ENCODE measurements at regions of chr14 and their contacts with region 1.

Region 1: DNA sequence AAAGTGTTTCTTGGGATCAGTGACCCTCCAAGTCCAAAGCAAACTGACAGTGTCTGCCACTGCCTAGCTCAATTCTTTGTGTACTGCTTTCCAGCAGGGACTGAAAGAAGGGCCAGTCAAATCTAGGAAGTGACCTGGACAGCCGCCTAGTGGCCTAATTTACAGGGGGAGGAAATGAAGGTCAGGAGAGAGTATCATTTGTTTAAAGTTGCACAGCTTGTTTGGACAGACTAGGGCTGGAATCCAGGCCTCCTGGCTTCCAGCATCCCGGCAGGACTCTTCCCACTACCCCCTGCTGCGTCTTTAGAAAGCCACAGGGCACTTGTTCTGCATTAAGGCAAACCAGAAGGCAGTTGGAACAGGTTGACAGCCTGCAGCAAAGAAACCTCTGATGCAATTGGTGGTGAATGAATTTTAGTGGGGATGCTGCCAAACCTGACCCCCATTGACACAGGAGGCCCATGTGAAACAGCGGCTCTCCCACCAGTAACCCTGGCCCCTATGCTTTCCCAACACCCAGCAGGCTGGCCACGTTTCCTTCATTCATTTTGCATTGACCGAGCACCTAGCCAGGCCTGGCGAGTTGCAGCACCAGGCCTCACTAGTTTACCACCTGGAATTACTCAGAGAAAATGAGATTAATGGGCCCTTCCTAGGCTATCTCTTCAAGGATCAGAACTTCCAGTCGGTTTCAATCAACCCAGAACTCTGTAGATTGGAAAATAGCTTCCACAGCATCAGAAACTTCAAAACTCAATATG is 28.2 kb downstream of the GALNT16 start:
- DNase-seq: peak; percentile 37
- H3K4me3 ChIP-seq: no peak overlapping the region
- H3K27me3 ChIP-seq: no peaks in the 10 kb centered on the region
- CTCF ChIP-seq: peak; percentile 66

Region 2: GRCh38 chr14:69027242-69027913 is 260.8 kb before region 1 on chr14:
- CTCF ChIA-PET with region 1: no interaction called
- POLR2A ChIA-PET with region 1: no interaction called
- DNase-seq: no peak
- H3K4me3 ChIP-seq: no peak overlapping the region
- H3K27me3 ChIP-seq: no peaks in the 10 kb centered on the region
- CTCF ChIP-seq: no peak

Region 3: DNA sequence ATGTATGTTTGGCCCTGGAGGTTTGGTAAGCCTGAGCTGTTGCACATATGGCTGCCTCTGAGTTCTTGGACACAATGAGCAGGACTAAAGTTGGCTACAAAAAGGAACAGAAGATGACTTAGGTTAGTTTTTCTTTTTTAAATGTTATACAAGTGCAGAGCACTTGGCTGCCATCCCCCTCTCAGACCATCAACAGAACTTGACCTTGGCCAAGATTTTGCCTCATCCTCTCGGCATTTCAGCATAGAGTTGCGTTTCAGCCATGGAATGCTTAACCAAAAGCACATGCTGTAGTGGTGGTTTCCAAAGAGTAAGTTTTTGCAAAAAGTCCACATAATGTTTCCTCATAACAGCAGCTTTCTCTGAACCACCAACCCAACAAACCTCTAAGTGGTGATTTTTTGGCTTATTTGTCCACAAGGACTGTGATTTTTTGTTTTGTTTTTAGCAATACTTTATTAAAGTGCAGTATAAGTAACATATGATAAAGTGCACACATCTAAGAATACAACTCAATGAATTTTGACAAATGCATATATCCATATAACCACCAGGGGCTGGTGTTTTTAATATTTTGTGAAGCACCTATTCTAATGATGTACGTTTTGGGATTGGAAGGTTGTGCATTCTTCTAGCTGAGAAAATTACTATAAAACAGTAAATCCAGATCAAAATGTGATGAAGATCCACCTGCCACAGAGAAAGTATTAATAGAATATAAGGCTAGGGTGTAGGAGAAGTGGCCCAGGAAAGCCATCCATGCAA is 40.3 kb before region 1 on chr14:
- CTCF ChIA-PET with region 1: interaction called, 14 read pairs
- POLR2A ChIA-PET with region 1: no interaction called
- DNase-seq: peak; percentile 92
- H3K4me3 ChIP-seq: no peak overlapping the region
- H3K27me3 ChIP-seq: no peaks in the 10 kb centered on the region
- CTCF ChIP-seq: peak; percentile 45; the same call in 1 of the 2 replicates

Region 4: DNA sequence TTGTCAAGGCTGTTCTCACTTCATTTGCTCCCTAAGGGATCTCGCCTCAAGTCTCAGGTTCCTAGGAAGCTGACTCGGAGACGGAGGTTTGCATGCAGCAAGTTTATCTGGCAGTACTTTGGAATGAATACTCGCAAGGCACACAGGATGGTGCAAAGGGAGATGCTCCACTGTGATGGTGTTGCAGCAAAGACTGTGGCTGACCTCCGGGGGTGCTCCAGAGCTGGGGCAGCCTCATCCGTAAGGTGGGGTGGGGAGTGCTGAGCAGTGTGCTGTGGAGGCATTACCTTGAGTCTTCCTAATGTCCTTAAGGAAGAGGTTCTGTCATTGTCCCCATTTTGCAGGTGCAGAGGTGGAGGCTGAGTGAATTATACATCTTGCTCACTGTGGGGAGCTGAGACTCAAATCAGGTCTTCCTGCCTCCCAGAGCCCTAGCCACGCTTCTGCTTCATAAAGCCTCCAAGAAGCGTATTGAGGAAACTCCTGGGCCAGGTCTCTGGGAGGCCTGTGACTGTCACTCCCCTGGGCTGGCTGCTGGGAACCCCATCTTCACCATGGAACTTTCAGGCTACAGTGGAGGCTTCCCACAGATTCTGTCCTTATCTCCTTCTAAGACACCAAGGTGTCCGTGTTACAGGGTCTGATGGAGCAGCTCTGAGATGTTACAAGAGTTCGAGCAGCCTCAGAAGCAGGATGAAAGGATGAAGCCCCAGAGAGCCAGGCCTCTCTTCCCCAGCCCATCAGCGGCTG is 11.3 kb after region 1 on chr14:
- CTCF ChIA-PET with region 1: interaction called, 20 read pairs
- POLR2A ChIA-PET with region 1: no interaction called
- DNase-seq: no peak
- H3K4me3 ChIP-seq: no peak overlapping the region
- H3K27me3 ChIP-seq: peaks cover 8% of the 10 kb centered on the region
- CTCF ChIP-seq: peak; percentile 16; the same call in 1 of the 2 replicates

Region 5: GRCh38 chr14:69355607-69356281 is 67.6 kb after region 1 on chr14:
- CTCF ChIA-PET with region 1: no interaction called
- POLR2A ChIA-PET with region 1: interaction called, 19 read pairs
- DNase-seq: peak; percentile 47
- H3K4me3 ChIP-seq: no peak overlapping the region
- H3K27me3 ChIP-seq: peaks cover 1% of the 10 kb centered on the region; the same call in 1 of the 2 replicates
- CTCF ChIP-seq: no peak

Region 6: DNA sequence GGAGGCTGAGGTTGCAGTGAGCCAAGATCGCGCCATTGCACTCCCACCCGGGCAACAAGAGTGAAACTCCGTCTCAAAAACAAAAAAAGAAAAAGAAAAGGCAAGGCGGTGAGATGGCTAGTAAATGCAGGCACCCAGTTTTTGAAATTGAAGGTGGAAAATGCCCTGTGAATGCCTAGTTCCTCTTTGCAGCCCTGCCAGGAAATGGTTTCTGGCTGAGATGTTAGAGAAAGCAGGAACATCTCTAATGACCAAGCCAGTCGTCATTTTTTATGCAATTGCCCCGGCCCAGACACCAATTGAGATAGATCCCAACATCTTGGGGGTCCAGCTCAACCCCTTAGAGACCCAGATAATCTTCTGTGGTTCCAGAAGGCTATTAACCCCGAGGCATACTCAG is 883.5 kb after region 1 on chr14:
- CTCF ChIA-PET with region 1: no interaction called
- POLR2A ChIA-PET with region 1: no interaction called
- DNase-seq: no peak
- H3K4me3 ChIP-seq: no peak overlapping the region
- H3K27me3 ChIP-seq: no peaks in the 10 kb centered on the region; the same call in 1 of the 2 replicates
- CTCF ChIP-seq: no peak

Measured in BJ (cell line).